ENCODE measurements at regions of chr2 and their contacts with region 1.

Region 1: DNA sequence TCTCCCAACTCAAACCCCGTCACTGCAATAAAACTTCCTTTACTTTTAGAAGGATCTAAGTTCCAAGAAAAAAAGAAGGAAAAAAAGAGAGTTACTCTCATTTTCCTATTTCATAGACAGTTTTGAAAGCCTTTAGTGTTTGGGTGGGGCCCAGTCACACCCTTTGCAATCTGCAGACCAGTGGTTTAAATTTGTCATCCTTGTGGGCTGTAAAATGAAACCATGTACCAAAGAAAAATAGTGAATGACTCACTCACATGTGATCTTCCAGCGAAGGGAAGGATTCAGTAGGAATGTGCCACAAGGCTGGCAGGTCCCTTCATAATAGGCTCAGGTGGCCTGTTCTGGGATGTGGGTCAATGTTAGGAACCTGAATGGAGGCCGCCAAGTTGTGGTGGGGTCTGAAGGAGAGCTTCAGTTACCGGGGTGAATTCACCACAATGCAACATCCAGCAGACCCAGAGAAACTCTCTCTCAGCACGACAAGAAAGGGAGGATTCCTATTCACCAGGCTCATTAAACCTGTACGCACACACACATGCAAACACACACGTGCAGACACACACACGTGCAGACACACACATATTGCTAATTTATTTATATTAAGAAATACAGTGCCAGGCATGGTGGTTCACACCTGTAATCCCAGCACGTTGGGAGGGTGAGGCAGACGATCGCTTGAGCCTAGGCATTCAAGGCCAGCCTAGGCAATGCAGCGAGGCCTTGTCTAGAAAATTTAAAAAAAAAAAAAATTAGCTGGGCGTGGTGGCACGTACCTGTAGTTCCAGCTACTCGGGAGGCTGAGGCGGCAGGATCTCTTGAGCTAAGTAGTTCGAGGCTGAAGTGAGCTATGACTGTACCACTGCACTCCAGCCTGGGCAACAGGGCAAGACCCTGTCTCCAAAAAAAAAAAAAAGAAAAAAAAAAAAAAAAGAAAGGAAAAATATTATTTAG is 28.5 kb downstream of the ANXA4 start:
- DNase-seq: peak; percentile 33
- H3K4me3 Mint-ChIP-seq: peak overlapping the region; percentile 6
- H3K27ac Mint-ChIP-seq: peak overlapping the region; percentile 69
- H3K4me1 Mint-ChIP-seq: peaks cover 80% of the 10 kb centered on the region
- H3K27me3 Mint-ChIP-seq: no peaks in the 10 kb centered on the region

Region 2: GRCh38 chr2:68441179-68441993 is 1329.1 kb before region 1 on chr2:
- intact Hi-C with region 1: no loop called
- DNase-seq: peak; percentile 78
- H3K4me3 Mint-ChIP-seq: peak overlapping the region; percentile 28
- H3K27ac Mint-ChIP-seq: peak overlapping the region; percentile 65
- H3K4me1 Mint-ChIP-seq: peaks cover 16% of the 10 kb centered on the region
- H3K27me3 Mint-ChIP-seq: peaks cover 15% of the 10 kb centered on the region

Region 3: GRCh38 chr2:69054431-69054830 is 716.0 kb before region 1 on chr2:
- intact Hi-C with region 1: loop called (anchors 10 kb)
- DNase-seq: no peak
- H3K4me3 Mint-ChIP-seq: no peak overlapping the region
- H3K27ac Mint-ChIP-seq: peak overlapping the region; percentile 62
- H3K4me1 Mint-ChIP-seq: peaks cover 24% of the 10 kb centered on the region
- H3K27me3 Mint-ChIP-seq: peaks cover 47% of the 10 kb centered on the region

Region 4: GRCh38 chr2:69509007-69509749 is 261.3 kb before region 1 on chr2:
- intact Hi-C with region 1: loop called (anchors 5 kb)
- DNase-seq: no peak
- H3K4me3 Mint-ChIP-seq: no peak overlapping the region
- H3K27ac Mint-ChIP-seq: peak overlapping the region; percentile 86
- H3K4me1 Mint-ChIP-seq: peaks cover 36% of the 10 kb centered on the region
- H3K27me3 Mint-ChIP-seq: no peaks in the 10 kb centered on the region

Region 5: DNA sequence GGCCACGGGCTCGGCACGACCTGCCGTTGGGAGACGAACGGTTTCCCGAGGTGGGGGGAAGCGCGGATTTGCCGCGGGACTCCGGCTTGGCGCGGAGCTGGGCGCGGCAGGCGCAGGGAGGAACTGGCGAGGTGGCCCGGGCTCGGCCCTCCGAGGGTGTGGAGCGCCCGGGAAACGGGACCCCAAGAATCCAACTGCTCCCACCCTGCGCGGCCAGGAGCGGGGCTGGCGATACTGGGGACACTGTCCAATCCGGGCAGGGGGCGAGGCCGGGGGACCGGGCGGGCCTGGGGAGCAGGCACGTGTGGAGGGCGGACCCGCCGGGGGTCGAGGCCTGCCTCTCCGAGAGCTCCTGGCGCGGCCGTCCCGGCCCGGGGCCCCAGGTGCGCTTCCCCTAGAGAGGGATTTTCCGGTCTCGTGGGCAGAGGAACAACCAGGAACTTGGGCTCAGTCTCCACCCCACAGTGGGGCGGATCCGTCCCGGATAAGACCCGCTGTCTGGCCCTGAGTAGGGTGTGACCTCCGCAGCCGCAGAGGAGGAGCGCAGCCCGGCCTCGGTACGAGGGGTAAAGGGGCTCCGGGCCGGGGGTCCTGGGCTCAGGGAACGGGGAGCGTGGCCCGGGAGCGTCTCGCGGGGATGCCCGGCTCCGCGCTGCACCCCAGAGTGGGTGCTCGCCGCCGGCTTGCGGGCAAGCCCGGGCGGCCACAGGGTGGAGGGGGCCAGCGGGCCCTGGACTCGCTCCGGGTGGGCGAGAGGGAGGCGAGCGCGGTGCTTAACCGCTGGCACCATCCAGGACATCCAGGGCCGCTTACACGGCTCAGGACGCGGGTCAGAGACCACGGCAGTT is 28.6 kb before region 1 on chr2 and contains the start of gene ANXA4:
- intact Hi-C with region 1: loop called (anchors 2 kb)
- DNase-seq: peak; percentile 65
- H3K4me3 Mint-ChIP-seq: peak within 1 kb of the TSS; percentile 92
- H3K27ac Mint-ChIP-seq: peak within 1 kb of the TSS; percentile 89
- H3K4me1 Mint-ChIP-seq: peaks cover 28% of the 10 kb centered on the region
- H3K27me3 Mint-ChIP-seq: peaks cover 12% of the 10 kb centered on the region
- total RNA-seq, gene ANXA4: 45.6 and 52.9 TPM in 2 replicates

Region 6: DNA sequence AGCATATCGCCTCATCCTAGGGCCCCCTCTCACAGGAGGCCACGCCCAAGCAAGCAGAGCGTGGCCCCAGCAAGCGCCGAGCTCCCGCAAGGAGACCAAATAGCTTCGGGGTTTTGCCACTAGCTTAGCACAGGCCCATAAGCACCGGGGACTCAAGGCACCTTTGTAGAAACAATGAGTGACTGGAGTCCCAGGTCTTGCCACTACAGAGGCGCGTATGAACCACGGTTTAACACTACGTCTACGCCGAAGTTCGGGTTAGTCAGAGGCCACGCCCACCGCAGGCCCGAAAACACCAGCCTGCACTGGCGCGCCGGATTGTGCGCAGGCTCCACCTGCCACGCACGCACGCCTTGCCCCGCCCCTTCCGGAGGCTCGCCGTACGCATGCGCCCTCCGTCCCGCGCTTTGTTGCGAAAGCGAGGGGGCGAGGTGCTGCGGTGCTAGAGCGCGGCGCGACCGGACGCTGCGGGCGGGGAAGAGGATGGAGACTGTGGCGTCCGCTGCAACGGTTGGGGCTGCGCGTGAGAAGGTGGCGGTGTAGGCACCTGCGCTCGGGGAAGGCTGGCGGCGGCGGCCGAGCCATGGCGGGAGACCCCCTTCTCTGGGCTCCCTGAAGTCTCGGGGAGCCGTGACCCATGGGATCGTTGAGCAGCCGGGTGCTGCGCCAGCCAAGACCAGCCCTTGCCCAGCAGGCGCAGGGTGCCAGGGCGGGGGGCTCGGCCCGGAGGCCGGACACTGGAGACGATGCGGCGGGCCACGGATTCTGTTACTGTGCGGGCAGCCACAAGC is 59.0 kb after region 1 on chr2 and contains the start of gene GMCL1:
- intact Hi-C with region 1: loop called (anchors 2 kb)
- DNase-seq: peak; percentile 99
- H3K4me3 Mint-ChIP-seq: peak within 1 kb of the TSS; percentile 84
- H3K27ac Mint-ChIP-seq: peak within 1 kb of the TSS; percentile 93
- H3K4me1 Mint-ChIP-seq: peaks cover 42% of the 10 kb centered on the region
- H3K27me3 Mint-ChIP-seq: no peaks in the 10 kb centered on the region
- total RNA-seq, gene GMCL1: 29.2 and 29.3 TPM in 2 replicates

Region 7: GRCh38 chr2:70132244-70133126 is 362.0 kb after region 1 on chr2:
- intact Hi-C with region 1: loop called (anchors 10 kb)
- DNase-seq: no peak
- H3K4me3 Mint-ChIP-seq: peak overlapping the region; percentile 87
- H3K27ac Mint-ChIP-seq: peak overlapping the region; percentile 99
- H3K4me1 Mint-ChIP-seq: peaks cover 61% of the 10 kb centered on the region
- H3K27me3 Mint-ChIP-seq: no peaks in the 10 kb centered on the region

Measured in activated T-helper 2 cell treated with anti-CD3 and anti-CD28 coated beads, Interferon-gamma antibody, Interleukin-2, Interleukin-4, amounts not matched to agents 10 μg/mL and 5 μg/mL and 100 μg/mL, durations not matched to agents 14 hours and 24 hours and 36 hours (primary cell).